ENCODE measurements at regions of chr20 and their contacts with region 1.

Region 1: GRCh38 chr20:32411955-32412706 is 54.0 kb downstream of the ASXL1 start:
- DNase-seq: no peak
- H3K4me3 Mint-ChIP-seq: no peak overlapping the region
- H3K27ac Mint-ChIP-seq: no peak overlapping the region
- H3K4me1 Mint-ChIP-seq: peaks cover 6% of the 10 kb centered on the region
- H3K27me3 Mint-ChIP-seq: no peaks in the 10 kb centered on the region
- CTCF ChIP-seq: no peak

Region 2: DNA sequence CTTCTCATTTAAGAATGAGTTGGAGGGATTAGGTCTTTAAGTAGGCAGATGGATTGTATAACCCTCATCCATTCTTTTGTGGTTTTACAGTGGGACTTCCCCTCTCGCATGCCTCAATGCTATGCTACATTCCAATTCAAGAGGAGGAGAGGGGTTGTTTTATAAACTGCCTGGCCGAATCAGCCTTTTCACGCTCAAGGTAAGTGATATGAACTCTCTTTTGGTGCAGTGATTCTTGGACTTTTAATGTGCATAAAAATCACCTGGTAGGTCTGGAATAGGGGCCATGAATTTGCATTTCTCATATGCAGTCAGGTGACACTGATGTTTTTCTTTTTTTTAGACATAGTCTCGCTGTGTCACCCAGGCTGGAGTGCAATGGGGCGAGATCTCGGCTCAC is 43.2 kb before region 1 on chr20:
- CTCF ChIA-PET with region 1: interaction called, 5 read pairs
- intact Hi-C with region 1: loop called (anchors 5 kb)
- DNase-seq: peak; percentile 18
- H3K4me3 Mint-ChIP-seq: peak overlapping the region; percentile 39
- H3K27ac Mint-ChIP-seq: no peak overlapping the region
- H3K4me1 Mint-ChIP-seq: peaks cover 40% of the 10 kb centered on the region
- H3K27me3 Mint-ChIP-seq: no peaks in the 10 kb centered on the region
- CTCF ChIP-seq: no peak

Region 3: GRCh38 chr20:32433311-32434021 is 21.3 kb after region 1 on chr20:
- CTCF ChIA-PET with region 1: interaction called, 10 read pairs
- intact Hi-C with region 1: no loop called
- DNase-seq: no peak
- H3K4me3 Mint-ChIP-seq: no peak overlapping the region
- H3K27ac Mint-ChIP-seq: no peak overlapping the region
- H3K4me1 Mint-ChIP-seq: no peaks in the 10 kb centered on the region
- H3K27me3 Mint-ChIP-seq: no peaks in the 10 kb centered on the region
- CTCF ChIP-seq: no peak